ENCODE measurements at regions of chr19 and their contacts with region 1.

Region 1: GRCh38 chr19:41706741-41707501 is 1.5 kb upstream of the CEACAM5 start:
- DNase-seq: peak; percentile 87
- H3K4me3 Mint-ChIP-seq: peak overlapping the region; percentile 77
- H3K27ac Mint-ChIP-seq: no peak overlapping the region
- H3K4me1 Mint-ChIP-seq: peaks cover 13% of the 10 kb centered on the region
- H3K27me3 Mint-ChIP-seq: peaks cover 62% of the 10 kb centered on the region
- CTCF ChIP-seq: peak; percentile 100

Region 2: DNA sequence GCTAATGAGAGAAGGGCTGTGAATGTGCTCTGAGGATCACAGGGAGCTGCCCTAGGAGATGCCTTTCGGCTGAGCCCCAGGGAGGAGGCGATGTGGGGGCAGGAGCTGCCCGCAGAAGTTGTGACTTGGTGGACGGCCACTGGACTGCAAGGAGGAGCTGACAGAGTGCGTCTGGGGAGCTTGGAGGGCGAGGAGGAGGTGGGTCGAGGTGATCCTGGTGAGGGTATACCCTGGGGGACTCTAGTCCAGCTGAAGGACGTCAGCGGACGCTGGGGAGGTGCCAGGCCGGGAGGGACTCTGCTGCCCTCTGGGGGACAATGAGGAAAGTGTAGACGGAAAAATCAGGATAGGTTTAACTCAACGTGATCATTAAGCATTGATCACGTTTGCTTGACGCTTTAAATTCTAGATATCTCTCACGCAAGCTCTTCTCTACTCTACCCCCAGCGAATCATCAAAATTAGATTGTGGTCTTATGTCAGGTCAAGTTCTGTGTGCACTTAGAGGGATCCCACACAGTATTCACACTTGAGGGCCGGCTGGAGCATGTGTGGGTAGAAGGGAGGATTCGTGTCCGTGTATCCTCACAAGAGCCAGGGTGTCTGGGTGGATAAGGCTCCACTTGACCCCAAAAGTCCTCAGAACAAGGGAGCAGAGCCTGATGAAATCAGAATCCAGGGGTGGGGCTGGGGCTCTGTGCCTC is 15.5 kb before region 1 on chr19:
- CTCF ChIA-PET with region 1: interaction called, 18 read pairs
- intact Hi-C with region 1: no loop called
- DNase-seq: peak; percentile 77
- H3K4me3 Mint-ChIP-seq: no peak overlapping the region
- H3K27ac Mint-ChIP-seq: no peak overlapping the region
- H3K4me1 Mint-ChIP-seq: peaks cover 30% of the 10 kb centered on the region
- H3K27me3 Mint-ChIP-seq: peaks cover 36% of the 10 kb centered on the region
- CTCF ChIP-seq: peak; percentile 88

Region 3: DNA sequence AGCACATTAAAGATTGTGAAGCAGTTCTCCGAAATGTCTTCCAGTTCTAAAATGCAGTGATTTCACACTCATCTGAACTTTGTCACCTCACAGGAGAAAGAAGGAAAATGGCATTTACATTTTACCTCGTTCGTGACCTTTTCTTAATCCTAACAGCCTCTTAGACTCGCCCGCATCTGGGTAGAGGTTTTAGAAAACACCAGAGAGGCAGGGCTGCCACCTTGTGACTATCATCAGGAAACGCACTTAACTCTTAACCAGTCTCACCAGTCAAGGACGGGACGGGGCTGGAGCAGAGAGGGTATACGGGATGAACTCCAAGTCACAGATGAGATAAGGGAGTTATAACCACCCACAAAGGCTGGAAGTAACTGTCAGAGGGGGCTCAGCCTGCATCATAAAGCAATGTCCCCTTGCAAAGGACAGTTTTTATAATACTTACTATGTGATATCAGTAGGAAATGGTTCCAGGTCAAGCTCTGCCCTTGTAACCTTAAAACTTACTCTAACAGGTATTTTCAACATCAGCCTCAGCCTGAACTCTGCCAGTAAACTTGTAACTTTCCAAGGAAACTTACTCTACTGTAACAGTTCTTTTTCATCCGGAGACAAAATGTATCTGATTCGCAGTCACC is 39.8 kb after region 1 on chr19:
- CTCF ChIA-PET with region 1: interaction called, 29 read pairs
- intact Hi-C with region 1: loop called (anchors 1 kb)
- DNase-seq: peak; percentile 72
- H3K4me3 Mint-ChIP-seq: no peak overlapping the region
- H3K27ac Mint-ChIP-seq: no peak overlapping the region
- H3K4me1 Mint-ChIP-seq: peaks cover 22% of the 10 kb centered on the region
- H3K27me3 Mint-ChIP-seq: peaks cover 40% of the 10 kb centered on the region
- CTCF ChIP-seq: peak; percentile 65

Region 4: GRCh38 chr19:41785653-41786052 is 78.7 kb after region 1 on chr19:
- CTCF ChIA-PET with region 1: interaction called, 20 read pairs
- intact Hi-C with region 1: loop called (anchors 1 kb)
- DNase-seq: peak; percentile 84
- H3K4me3 Mint-ChIP-seq: no peak overlapping the region
- H3K27ac Mint-ChIP-seq: peak overlapping the region; percentile 4
- H3K4me1 Mint-ChIP-seq: peaks cover 29% of the 10 kb centered on the region
- H3K27me3 Mint-ChIP-seq: no peaks in the 10 kb centered on the region
- CTCF ChIP-seq: peak; percentile 93

Region 5: DNA sequence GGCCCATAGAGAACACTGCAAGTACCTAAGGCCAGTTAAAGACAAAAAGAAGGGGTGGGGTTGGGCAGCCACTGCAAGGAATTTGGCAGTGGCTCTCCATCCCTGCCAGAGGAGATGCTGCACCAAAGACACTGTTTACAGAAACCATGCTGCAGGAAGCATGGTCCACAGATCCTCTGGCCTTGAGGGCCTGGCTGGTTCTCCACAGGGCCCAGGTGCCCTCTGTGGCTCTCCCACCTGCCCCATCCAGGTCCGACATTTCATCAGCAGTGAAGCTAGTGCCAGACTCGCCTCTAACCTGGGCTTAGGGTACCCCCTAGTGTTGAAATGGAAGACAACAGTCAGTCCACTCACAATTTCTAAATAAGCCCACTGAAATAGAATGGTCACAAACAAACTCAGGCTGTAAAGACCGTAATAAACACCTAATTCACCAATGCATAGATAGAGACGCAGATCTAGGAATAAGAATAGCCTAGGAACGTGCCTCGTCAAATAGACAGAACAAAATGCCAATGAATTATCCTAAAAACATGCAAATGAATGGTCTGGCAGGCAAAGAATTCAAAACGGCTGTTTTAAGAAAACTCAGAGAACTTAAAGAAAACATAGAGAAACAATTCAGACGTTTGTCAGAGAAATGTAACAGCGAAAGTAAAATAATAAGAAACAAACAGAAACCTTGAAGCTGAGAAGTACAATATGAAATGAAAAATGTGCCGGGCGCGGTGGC is 114.2 kb after region 1 on chr19:
- CTCF ChIA-PET with region 1: interaction called, 14 read pairs
- intact Hi-C with region 1: no loop called
- DNase-seq: peak; percentile 82
- H3K4me3 Mint-ChIP-seq: no peak overlapping the region
- H3K27ac Mint-ChIP-seq: no peak overlapping the region
- H3K4me1 Mint-ChIP-seq: no peaks in the 10 kb centered on the region
- H3K27me3 Mint-ChIP-seq: peaks cover 70% of the 10 kb centered on the region
- CTCF ChIP-seq: peak; percentile 79